Astrocyte of the cerebellum (primary cell): ENCODE measurements at regions of chr5 and their contacts with region 1.

Region 1: DNA sequence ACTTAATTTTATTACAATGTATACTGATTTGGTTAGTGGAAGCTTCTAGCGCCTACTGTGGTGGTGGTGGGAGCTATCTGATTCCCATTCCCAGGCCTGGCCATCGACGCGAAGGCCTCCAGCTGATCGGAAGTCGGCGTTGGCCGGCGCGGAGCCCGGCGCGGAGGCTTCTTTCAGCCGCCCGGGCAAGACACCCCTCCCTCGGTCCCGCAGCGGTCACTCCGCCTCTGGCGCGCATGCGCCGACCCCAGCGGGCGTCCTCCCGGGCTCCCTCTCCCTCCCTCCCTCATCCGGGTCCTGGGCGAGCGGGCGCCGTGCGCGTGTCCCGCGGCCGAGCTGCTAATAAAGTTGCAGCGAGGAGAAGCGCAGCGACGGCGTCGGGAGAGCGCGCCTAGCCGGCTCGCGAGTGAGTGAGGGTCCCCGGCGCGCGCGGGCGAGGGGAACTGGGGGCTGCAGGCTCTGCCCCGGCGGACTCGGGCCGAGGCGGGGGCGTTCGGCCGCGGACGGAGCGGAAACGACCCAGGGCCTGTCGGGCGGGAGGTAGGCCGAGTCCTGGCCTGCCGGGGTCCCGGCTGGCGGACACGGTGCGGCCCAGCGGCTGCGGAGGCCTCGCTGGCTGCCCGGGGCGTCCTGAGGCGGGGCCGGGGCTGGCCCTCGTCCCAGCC is at the start of gene SMAD5:
- DNase-seq: peak; percentile 87
- H3K4me3 ChIP-seq: peak within 1 kb of the TSS; percentile 89
- CTCF ChIP-seq: peak; percentile 11

Region 2: GRCh38 chr5:136080483-136081216 is 52.0 kb before region 1 on chr5:
- in situ Hi-C with region 1: loop called (anchors 5 kb)
- DNase-seq: peak; percentile 86
- H3K4me3 ChIP-seq: peak overlapping the region; percentile 50
- CTCF ChIP-seq: no peak

Region 3: GRCh38 chr5:137051165-137051564 is 918.5 kb after region 1 on chr5:
- in situ Hi-C with region 1: no loop called
- DNase-seq: no peak
- H3K4me3 ChIP-seq: no peak overlapping the region
- CTCF ChIP-seq: peak; percentile 39